Panc1 (cell line): ENCODE measurements at regions of chr4 and their contacts with region 1.

Region 1: GRCh38 chr4:154406018-154406795 is 85.4 kb downstream of the DCHS2 start:
- DNase-seq: no peak
- ATAC-seq: no peak
- H3K4me3 ChIP-seq: no peak overlapping the region
- H3K27ac ChIP-seq: no peak overlapping the region
- H3K4me1 ChIP-seq: no peaks in the 10 kb centered on the region
- H3K27me3 ChIP-seq: no peaks in the 10 kb centered on the region
- CTCF ChIP-seq: no peak

Region 2: GRCh38 chr4:153901220-153901619 is 505.0 kb before region 1 on chr4:
- CTCF ChIA-PET with region 1: no interaction called
- POLR2A ChIA-PET with region 1: no interaction called
- in situ Hi-C with region 1: no loop called
- intact Hi-C with region 1: no loop called
- DNase-seq: no peak
- ATAC-seq: no peak
- H3K4me3 ChIP-seq: no peak overlapping the region
- H3K27ac ChIP-seq: no peak overlapping the region
- H3K4me1 ChIP-seq: no peaks in the 10 kb centered on the region
- H3K27me3 ChIP-seq: no peaks in the 10 kb centered on the region
- CTCF ChIP-seq: no peak

Region 3: DNA sequence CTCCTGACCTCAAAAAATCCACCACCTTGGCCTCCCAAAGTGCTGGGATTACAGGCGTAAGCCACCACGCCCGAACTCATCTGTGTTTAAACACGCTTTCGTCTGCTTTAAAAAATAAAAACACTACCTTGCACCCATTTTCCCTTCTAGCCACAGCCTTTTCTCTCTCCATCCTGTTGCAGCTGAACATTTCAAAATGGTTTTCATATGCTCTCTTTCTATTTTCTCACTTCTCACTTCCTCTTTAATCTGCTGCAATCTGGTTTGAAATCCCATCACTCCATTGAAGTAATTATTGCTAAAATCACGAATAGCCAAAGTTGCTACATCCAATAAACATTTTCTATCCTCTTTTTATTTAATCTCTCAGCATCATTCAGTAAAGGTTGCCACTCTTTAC is 15.4 kb after region 1 on chr4:
- CTCF ChIA-PET with region 1: interaction called, 14 read pairs
- POLR2A ChIA-PET with region 1: no interaction called
- in situ Hi-C with region 1: no loop called
- intact Hi-C with region 1: no loop called
- DNase-seq: no peak
- ATAC-seq: no peak
- H3K4me3 ChIP-seq: no peak overlapping the region
- H3K27ac ChIP-seq: no peak overlapping the region
- H3K4me1 ChIP-seq: no peaks in the 10 kb centered on the region
- H3K27me3 ChIP-seq: no peaks in the 10 kb centered on the region
- CTCF ChIP-seq: no peak